ENCODE measurements at regions of chr14 and their contacts with region 1.

Region 1: GRCh38 chr14:67704484-67705089 is 2.9 kb downstream of the RDH12 start:
- DNase-seq: peak; percentile 62
- H3K4me3 Mint-ChIP-seq: peak overlapping the region; percentile 49
- H3K27ac Mint-ChIP-seq: peak overlapping the region; percentile 78
- H3K4me1 Mint-ChIP-seq: peaks cover 16% of the 10 kb centered on the region
- H3K27me3 Mint-ChIP-seq: no peaks in the 10 kb centered on the region
- CTCF ChIP-seq: peak; percentile 50

Region 2: GRCh38 chr14:67426983-67427606 is 277.5 kb before region 1 on chr14:
- CTCF ChIA-PET with region 1: interaction called, 19 read pairs
- intact Hi-C with region 1: loop called (anchors 10 kb)
- DNase-seq: peak; percentile 77
- H3K4me3 Mint-ChIP-seq: no peak overlapping the region
- H3K27ac Mint-ChIP-seq: no peak overlapping the region
- H3K4me1 Mint-ChIP-seq: peaks cover 12% of the 10 kb centered on the region
- H3K27me3 Mint-ChIP-seq: peaks cover 14% of the 10 kb centered on the region
- CTCF ChIP-seq: peak; percentile 63

Region 3: GRCh38 chr14:67526676-67527459 is 177.7 kb before region 1 on chr14:
- CTCF ChIA-PET with region 1: interaction called, 17 read pairs
- intact Hi-C with region 1: loop called (anchors 5 kb)
- DNase-seq: peak; percentile 45
- H3K4me3 Mint-ChIP-seq: no peak overlapping the region
- H3K27ac Mint-ChIP-seq: no peak overlapping the region
- H3K4me1 Mint-ChIP-seq: peaks cover 7% of the 10 kb centered on the region
- H3K27me3 Mint-ChIP-seq: peaks cover 75% of the 10 kb centered on the region
- CTCF ChIP-seq: peak; percentile 90

Region 4: DNA sequence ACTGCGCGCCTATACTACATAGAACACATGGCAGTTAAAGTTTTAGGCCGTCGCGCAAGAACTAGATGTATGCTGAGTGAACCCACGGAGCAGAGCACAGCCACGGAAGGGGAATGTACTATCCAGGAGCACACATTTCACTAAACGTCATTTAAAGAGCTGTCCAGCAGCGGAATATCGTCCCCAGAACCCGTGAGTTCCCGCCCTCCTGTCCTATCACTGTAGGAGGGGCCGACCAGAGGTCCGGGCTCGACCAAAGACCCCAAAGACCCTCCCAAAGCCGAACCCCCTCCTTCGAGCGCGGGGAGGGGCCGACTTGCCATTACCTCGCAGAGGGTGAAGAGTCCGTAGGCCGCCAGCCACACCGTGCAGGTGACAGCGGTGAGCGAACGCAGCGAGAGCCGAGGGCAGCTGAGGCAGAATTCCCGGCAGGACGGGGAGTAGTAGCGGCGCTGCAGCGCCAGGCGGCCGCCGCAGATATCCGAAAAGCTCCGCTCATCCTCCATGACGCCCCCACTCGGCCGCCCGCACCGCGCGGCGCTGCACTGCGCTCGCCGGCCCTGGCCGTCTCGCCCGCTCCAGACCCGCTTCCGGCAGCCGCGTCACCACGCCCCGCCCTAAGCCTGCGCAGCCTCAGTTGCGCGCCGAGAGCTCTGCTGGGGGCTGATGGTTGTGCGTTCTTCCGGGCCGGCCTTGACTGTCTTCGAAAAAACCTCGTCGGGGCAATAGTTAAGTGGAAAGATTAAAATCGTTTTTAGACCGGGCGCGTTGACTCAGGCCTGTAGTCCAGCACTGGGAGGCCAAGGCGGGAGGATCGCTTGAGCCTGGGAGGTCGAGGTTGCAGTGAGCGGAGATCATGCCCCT is 104.7 kb before region 1 on chr14 and contains the start of gene PIGH:
- CTCF ChIA-PET with region 1: interaction called, 18 read pairs
- intact Hi-C with region 1: no loop called
- DNase-seq: peak; percentile 94
- H3K4me3 Mint-ChIP-seq: peak within 1 kb of the TSS; percentile 92
- H3K27ac Mint-ChIP-seq: peak within 1 kb of the TSS; percentile 85
- H3K4me1 Mint-ChIP-seq: peaks cover 17% of the 10 kb centered on the region
- H3K27me3 Mint-ChIP-seq: no peaks in the 10 kb centered on the region
- CTCF ChIP-seq: peak; percentile 75
- total RNA-seq, gene PIGH: 19.0 and 19.7 TPM in 2 replicates

Region 5: DNA sequence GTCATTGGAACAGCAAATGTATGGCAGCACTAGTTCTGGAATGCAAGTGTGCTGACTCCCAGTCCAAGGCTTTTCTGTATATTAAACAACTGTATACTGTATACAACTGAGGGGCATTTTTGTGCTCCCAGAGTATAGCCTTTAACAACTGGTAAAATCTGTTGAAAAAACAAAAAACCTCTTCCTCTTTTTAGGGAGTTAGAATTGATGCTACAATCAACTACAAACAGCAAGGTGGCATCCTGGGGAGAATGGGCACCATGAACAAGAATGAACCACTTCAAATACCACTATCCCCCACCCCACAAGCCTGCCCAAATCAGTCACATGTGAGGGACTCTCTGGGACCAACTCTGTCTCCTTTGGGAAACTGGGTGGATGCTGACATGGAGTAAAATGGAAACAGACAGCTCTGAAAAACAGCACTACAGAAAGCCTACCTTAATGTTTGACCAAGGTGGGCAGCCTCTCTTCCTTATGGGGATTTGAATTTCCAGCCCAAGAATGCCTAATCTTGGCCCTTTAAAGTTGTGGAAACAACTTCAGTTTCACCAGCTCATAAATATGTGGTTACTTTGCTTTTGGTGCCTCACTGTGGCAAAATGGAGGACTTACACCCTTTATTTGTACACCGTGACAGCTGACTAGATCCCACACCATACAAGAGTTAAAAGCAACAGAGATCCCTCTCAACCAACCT is 37.7 kb before region 1 on chr14:
- CTCF ChIA-PET with region 1: interaction called, 15 read pairs
- intact Hi-C with region 1: loop called (anchors 5 kb)
- DNase-seq: peak; percentile 21
- H3K4me3 Mint-ChIP-seq: no peak overlapping the region
- H3K27ac Mint-ChIP-seq: no peak overlapping the region
- H3K4me1 Mint-ChIP-seq: no peaks in the 10 kb centered on the region
- H3K27me3 Mint-ChIP-seq: no peaks in the 10 kb centered on the region
- CTCF ChIP-seq: peak; percentile 50

Region 6: GRCh38 chr14:67766172-67766680 is 61.6 kb after region 1 on chr14:
- CTCF ChIA-PET with region 1: interaction called, 12 read pairs
- intact Hi-C with region 1: no loop called
- DNase-seq: no peak
- H3K4me3 Mint-ChIP-seq: no peak overlapping the region
- H3K27ac Mint-ChIP-seq: no peak overlapping the region
- H3K4me1 Mint-ChIP-seq: peaks cover 25% of the 10 kb centered on the region
- H3K27me3 Mint-ChIP-seq: no peaks in the 10 kb centered on the region
- CTCF ChIP-seq: no peak